Psoas muscle (tissue), 8 donors: ENCODE measurements at regions of chr5 and their contacts with region 1.

Region 1: GRCh38 chr5:143413958-143414669 is 10.6 kb upstream of the NR3C1 start:
- DNase-seq: peak; percentile 15 to 61
- ATAC-seq: peak; percentile 44 to 92 (median 88)
- H3K4me3 ChIP-seq: no peak overlapping the region
- H3K27ac ChIP-seq: peak overlapping the region; percentile 2
- H3K4me1 ChIP-seq: peaks cover 4% of the 10 kb centered on the region
- H3K27me3 ChIP-seq: no peaks in the 10 kb centered on the region
- CTCF ChIP-seq: no peak

Region 2: GRCh38 chr5:143968011-143968878 is 554.1 kb after region 1 on chr5:
- intact Hi-C with region 1: loop called in 1 of 2 experiments (anchors 10 kb)
- DNase-seq: no peak
- ATAC-seq: peak in 3 of 4 donors; percentile 44 to 61 (median 48)
- H3K4me3 ChIP-seq: no peak overlapping the region
- H3K27ac ChIP-seq: no peak overlapping the region
- H3K4me1 ChIP-seq: no peaks in the 10 kb centered on the region
- H3K27me3 ChIP-seq: no peaks in the 10 kb centered on the region
- CTCF ChIP-seq: peak; percentile 53